IMR-90 (cell line): ENCODE measurements at regions of chr9 and their contacts with region 1.

Region 1: DNA sequence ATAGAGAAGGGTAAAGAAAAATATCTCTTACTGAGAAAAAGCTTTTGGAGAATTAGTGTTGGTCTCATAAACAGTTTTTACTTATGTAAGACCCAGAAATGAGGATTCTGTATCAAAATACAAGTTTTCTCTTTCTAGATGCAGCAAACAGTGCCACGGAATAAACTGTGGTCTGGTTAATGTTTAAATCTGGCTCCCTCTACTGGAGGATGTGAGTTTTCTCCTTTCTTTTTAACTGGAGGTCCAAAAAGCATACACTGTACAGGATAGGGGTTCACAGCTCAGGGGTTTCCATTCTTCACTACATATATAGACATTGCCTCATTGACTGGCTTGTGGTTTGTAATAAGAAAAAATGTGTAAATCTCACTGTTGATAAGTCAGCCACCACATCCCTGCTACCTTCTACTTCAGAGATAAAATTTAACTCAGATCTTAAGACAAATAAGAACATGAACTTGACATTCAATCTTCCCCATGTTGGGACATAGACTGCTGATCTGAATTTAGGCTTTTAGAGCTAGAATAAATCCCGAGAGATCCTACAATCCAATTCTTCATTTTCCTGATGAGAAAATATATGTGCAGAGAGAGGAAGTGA is 98.9 kb downstream of the CFAP95 start:
- DNase-seq: peak; percentile 74
- ATAC-seq: peak; percentile 93
- H3K4me3 ChIP-seq: no peak overlapping the region
- H3K27ac ChIP-seq: no peak overlapping the region
- H3K4me1 ChIP-seq: peaks cover 2% of the 10 kb centered on the region; the same call in 1 of the 2 replicates
- H3K27me3 ChIP-seq: no peaks in the 10 kb centered on the region
- CTCF ChIP-seq: peak; percentile 82
- POLR2A ChIP-seq: no peak
- RAD21 ChIP-seq: peak; percentile 81

Region 2: GRCh38 chr9:69809304-69809863 is 110.2 kb before region 1 on chr9:
- CTCF ChIA-PET with region 1: interaction called, 4 read pairs
- POLR2A ChIA-PET with region 1: no interaction called
- dilution Hi-C with region 1: no loop called
- in situ Hi-C with region 1: no loop called
- intact Hi-C with region 1: loop called (anchors 5 kb)
- DNase-seq: peak; percentile 21
- ATAC-seq: no peak
- H3K4me3 ChIP-seq: no peak overlapping the region
- H3K27ac ChIP-seq: no peak overlapping the region
- H3K4me1 ChIP-seq: no peaks in the 10 kb centered on the region
- H3K27me3 ChIP-seq: peaks cover 7% of the 10 kb centered on the region
- CTCF ChIP-seq: peak; percentile 50
- POLR2A ChIP-seq: no peak
- RAD21 ChIP-seq: peak; percentile 51